ENCODE measurements at regions of chr18 and their contacts with region 1.

Region 1: DNA sequence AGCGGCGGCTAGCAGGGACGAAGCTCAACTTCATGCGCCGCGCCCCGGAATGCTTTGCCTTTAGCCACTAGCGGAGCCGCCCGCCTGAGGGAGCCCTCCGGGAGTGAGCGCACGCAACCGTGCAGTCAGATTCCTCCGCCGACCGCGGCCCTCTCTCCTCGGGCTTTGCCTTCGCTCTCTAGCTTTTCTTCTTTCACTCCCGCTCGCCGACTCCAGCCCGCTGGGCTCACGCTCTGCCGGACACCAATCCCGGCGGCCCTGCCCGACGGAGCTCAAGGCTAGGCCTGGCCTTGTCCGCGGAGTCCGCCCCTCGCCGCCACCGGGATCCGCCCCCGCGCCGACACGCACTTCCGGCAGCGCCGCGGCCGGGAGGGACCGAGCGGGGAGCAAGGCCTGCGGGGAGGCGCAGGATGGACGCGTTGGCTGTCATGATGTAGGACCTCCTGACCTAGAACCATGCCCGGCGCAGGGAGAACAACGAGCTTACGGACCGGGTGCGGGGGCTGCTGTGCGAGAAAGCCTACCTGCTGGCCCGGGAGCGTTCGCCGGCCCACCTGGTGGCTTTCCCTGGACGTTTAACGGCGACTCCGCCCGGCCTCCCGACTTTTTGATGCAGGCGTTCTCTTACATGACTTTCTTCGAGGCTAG is 40.8 kb upstream of the AKAIN1 start:
- DNase-seq: peak; percentile 85
- ATAC-seq: peak; percentile 95
- H3K4me3 ChIP-seq: peak overlapping the region; percentile 66
- H3K27ac ChIP-seq: peak overlapping the region; percentile 92
- H3K4me1 ChIP-seq: no peaks in the 10 kb centered on the region
- H3K27me3 ChIP-seq: no peaks in the 10 kb centered on the region
- CTCF ChIP-seq: peak; percentile 12; the same call in 1 of the 2 replicates
- POLR2A ChIP-seq: peak; percentile 78
- RAD21 ChIP-seq: no peak

Region 2: GRCh38 chr18:5015213-5015711 is 222.6 kb before region 1 on chr18:
- CTCF ChIA-PET with region 1: no interaction called
- POLR2A ChIA-PET with region 1: no interaction called
- dilution Hi-C with region 1: no loop called
- in situ Hi-C with region 1: no loop called
- intact Hi-C with region 1: no loop called
- DNase-seq: no peak
- ATAC-seq: no peak
- H3K4me3 ChIP-seq: no peak overlapping the region
- H3K27ac ChIP-seq: no peak overlapping the region
- H3K4me1 ChIP-seq: no peaks in the 10 kb centered on the region
- H3K27me3 ChIP-seq: no peaks in the 10 kb centered on the region
- CTCF ChIP-seq: no peak
- POLR2A ChIP-seq: no peak
- RAD21 ChIP-seq: no peak

Region 3: GRCh38 chr18:5295981-5296705 is 58.3 kb after region 1 on chr18:
- CTCF ChIA-PET with region 1: no interaction called
- POLR2A ChIA-PET with region 1: interaction called, 3 read pairs
- dilution Hi-C with region 1: no loop called
- in situ Hi-C with region 1: loop called (anchors 5 kb)
- intact Hi-C with region 1: loop called (anchors 1 kb)
- DNase-seq: peak; percentile 96
- ATAC-seq: peak; percentile 79
- H3K4me3 ChIP-seq: peak overlapping the region; percentile 65
- H3K27ac ChIP-seq: peak overlapping the region; percentile 87
- H3K4me1 ChIP-seq: peaks cover 3% of the 10 kb centered on the region
- H3K27me3 ChIP-seq: peaks cover 4% of the 10 kb centered on the region; the same call in 1 of the 2 replicates
- CTCF ChIP-seq: no peak
- POLR2A ChIP-seq: peak; percentile 42
- RAD21 ChIP-seq: no peak

Region 4: DNA sequence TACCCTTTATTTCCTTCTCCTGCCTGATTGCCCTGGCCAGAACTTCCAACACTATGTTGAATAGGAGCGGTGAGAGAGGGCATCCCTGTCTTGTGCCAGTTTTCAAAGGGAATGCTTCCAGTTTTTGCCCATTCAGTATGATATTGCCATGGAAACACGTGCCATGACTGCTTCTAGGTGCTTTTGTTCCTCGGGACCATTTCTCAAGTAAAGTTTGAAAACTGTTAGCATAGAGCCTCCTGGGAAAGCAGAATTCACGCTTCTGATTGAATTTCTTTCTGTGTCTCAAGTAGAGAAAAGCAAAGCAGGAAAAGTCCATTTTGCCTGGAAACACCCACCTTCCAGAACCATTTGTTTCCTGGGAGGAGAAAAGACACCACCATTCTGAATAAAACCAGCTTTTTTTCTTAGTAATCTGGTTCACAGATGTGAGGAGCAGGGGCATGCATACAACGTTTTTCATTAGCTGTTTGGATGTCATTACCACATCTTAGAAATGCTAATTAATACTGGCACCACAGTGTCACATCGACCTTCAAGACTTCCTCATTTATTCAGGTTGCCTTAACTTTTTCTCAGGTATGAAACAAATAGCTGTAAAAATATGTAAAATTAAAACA is 96.7 kb after region 1 on chr18:
- CTCF ChIA-PET with region 1: no interaction called
- POLR2A ChIA-PET with region 1: no interaction called
- dilution Hi-C with region 1: no loop called
- in situ Hi-C with region 1: no loop called
- intact Hi-C with region 1: no loop called
- DNase-seq: no peak
- ATAC-seq: no peak
- H3K4me3 ChIP-seq: no peak overlapping the region
- H3K27ac ChIP-seq: no peak overlapping the region
- H3K4me1 ChIP-seq: no peaks in the 10 kb centered on the region
- H3K27me3 ChIP-seq: no peaks in the 10 kb centered on the region
- CTCF ChIP-seq: no peak
- POLR2A ChIP-seq: no peak
- RAD21 ChIP-seq: no peak

Region 5: DNA sequence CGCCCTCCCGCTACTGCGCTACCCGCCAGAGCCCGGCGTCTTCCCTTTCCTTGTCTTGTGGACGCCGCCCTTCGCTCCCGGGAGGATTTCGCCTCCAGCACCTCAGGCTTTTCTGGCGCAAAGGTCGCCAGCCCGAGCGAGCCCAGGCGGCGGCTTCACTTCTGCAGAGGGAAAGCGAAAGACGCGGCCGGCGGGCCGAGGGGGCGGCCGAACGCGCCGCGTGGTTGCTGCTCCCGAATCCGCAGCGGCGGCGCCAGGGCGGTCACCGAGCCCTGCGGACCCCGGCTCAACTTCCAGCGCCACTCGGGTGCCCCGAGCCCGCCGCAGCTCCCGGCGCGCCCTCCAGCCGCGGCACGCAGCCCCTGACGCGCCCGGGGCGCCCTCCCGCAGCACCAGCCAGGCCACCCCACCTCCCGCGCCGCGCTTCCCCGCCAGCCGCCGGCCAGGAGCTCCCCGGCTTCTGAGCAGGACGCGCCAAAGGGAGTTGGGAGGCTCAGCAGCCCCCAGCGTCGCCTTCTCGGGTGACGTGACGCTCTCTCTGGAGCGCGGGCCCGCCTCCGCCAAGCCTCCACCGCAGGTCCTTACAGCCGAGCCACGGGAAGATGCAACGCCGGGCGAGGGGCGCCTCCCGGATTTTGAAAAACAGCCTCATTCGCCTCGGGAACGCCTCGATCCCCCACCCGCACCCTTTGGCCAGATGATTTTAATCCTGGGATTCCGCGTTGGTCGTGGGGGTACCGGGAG is 390.8 kb after region 1 on chr18:
- CTCF ChIA-PET with region 1: no interaction called
- POLR2A ChIA-PET with region 1: no interaction called
- dilution Hi-C with region 1: no loop called
- in situ Hi-C with region 1: no loop called
- intact Hi-C with region 1: loop called (anchors 5 kb)
- DNase-seq: peak; percentile 17
- ATAC-seq: peak; percentile 41
- H3K4me3 ChIP-seq: peak overlapping the region; percentile 60
- H3K27ac ChIP-seq: no peak overlapping the region; the same call in 1 of the 2 replicates
- H3K4me1 ChIP-seq: no peaks in the 10 kb centered on the region; the same call in 1 of the 2 replicates
- H3K27me3 ChIP-seq: peaks cover 18% of the 10 kb centered on the region
- CTCF ChIP-seq: no peak
- POLR2A ChIP-seq: no peak
- RAD21 ChIP-seq: no peak